Adrenal gland (tissue), 19 donors: ENCODE measurements at regions of chr19 and their contacts with region 1.

Region 1: GRCh38 chr19:18589380-18590272 is 1.0 kb downstream of the REX1BD start:
- DNase-seq: peak; percentile 65 to 81 (median 74)
- H3K4me3 ChIP-seq: peak overlapping the region; percentile 31 to 67 (median 50)
- H3K27ac ChIP-seq: peak overlapping the region; percentile 30 to 92 (median 78)
- H3K4me1 ChIP-seq: peaks cover 10 to 30% of the 10 kb centered on the region in 2 donors
- H3K27me3 ChIP-seq: no peaks in the 10 kb centered on the region
- CTCF ChIP-seq: peak in 3 of 6 experiments; percentile 26 to 47 (median 28)
- POLR2A ChIP-seq: no peak

Region 2: DNA sequence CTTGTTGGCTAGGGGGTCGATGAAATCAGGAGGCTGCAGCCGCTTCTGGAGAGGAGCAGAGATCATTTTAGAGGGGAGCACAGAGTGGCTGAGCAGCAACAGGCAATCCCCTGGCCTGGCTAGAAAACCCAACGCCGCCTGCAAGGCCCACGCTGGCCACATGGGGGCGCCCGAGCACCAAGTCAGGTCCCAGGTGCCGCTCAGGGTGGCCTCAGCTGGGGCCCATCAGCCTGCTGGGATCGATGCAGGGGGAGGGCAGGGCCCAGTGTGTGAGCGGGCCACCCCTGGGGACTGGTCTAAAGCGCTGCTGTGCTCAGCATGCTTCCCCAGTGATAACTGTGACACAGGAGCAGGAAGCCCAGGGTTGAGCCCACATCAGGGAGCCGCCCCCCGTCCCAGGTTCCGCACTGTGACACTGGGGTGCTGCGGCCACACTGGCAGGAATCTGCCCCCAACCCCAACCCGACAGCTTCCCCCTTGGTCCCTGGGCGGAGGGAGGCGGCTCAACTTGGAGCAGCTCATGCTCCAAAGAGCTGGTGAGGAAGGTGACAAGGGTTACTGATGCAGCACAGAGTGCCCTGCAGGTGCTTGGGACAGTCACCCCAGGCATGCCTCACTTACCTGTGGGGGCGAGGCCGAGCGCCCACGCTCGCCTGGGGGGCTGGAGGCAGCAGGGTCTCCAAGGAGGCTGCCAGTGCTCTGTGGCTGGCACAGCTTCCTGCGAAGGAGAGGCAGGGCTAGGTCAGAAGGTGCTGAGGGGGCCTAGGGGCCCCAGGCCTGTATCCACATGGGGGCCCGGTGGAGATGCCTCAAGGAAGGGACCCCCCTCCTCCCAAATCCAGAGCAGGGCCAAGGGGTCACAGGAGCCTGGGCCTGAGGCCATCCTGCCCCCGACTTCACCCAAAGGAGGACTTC is 138.4 kb before region 1 on chr19:
- intact Hi-C with region 1: loop called in 1 of 2 experiments (anchors 10 kb)
- DNase-seq: peak; percentile 77 to 95 (median 88)
- H3K4me3 ChIP-seq: no peak overlapping the region
- H3K27ac ChIP-seq: peak overlapping the region in 1 of 5 donors; percentile 53
- H3K4me1 ChIP-seq: peaks cover 0 to 4% of the 10 kb centered on the region in 2 donors
- H3K27me3 ChIP-seq: no peaks in the 10 kb centered on the region
- CTCF ChIP-seq: peak; percentile 90 to 99 (median 97)
- POLR2A ChIP-seq: no peak

Region 3: DNA sequence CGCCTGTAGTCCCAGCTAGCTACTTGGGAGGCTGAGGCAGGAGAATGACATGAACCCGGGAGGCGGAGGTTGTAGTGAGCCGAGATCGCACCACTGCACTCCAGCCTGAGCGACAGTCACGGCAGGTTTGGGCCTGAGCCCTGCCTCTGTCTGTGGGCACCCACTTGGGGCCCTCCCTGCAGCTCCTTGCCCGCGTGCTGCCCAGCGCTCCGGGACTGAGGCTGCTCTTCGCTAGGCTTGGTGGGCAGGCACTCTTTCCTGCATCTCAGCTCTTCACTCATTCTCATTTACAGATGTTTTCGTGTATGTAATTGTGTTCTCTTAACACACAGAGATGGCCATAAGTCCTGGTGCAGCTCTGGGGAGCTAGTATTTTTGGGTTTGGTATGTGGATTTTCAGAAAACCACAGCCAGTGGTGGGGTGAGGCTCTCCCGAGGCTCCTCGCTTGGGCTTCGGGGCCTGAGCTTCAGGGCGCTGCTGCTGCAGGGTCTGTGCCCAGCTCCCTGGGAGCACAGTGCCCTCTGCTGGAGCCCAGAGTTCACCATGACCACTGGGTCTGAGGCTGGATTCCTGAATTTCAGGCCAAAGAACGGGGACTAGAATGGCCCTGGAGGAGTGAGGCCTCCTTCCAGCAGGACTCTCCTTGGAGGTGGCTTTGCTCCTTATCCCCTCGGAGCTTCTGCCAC is 257.4 kb after region 1 on chr19:
- intact Hi-C with region 1: loop called (anchors 5 to 10 kb)
- DNase-seq: peak; percentile 76 to 91 (median 84)
- H3K4me3 ChIP-seq: no peak overlapping the region
- H3K27ac ChIP-seq: peak overlapping the region in 3 of 5 donors; percentile 51 to 89 (median 82)
- H3K4me1 ChIP-seq: peaks cover 33 to 72% of the 10 kb centered on the region in 2 donors
- H3K27me3 ChIP-seq: no peaks in the 10 kb centered on the region
- CTCF ChIP-seq: peak; percentile 72 to 91 (median 78)
- POLR2A ChIP-seq: no peak